ENCODE measurements at regions of chr19 and their contacts with region 1.

Region 1: GRCh38 chr19:55146078-55146704 is 2.8 kb downstream of the TNNT1 start:
- DNase-seq: peak; percentile 81
- ATAC-seq: peak; percentile 61
- H3K4me3 ChIP-seq: peak overlapping the region; percentile 76
- H3K27ac ChIP-seq: peak overlapping the region; percentile 33; the same call in 1 of the 2 replicates
- H3K4me1 ChIP-seq: peaks cover 6% of the 10 kb centered on the region; the same call in 1 of the 2 replicates
- H3K27me3 ChIP-seq: no peaks in the 10 kb centered on the region
- CTCF ChIP-seq: peak; percentile 91

Region 2: DNA sequence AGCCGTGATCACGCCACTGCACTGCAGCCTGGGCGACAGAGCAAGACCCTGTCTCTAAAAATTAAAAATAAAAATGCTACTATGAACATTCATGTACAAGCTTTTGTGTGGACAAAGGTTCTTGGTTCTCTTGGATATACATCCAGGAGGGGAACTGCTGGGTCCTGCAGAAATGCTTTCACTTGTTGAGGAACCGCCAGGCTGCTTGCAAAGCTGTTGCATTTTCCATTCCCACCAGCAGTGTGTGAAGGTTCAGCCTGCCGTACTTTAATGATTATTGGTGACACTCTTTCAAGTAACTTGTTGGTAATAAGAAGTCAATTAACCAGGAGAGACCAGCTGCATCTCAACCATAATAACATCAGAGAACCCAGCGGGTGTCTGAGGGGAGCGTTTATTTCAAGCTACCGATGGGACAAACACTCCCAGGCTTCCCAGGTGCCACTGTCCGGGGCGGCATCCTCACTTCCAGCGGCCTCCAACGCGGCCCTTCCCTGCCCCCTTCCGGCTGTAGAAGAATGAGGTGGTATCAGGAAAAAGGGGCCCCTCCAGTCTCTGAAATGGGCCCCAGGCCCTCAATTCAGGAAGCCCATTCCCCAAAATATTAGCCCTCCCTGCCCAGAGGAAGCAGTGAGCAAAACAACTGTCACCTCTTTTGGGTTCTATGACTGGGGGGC is 13.6 kb before region 1 on chr19:
- CTCF ChIA-PET with region 1: interaction called, 11 read pairs
- POLR2A ChIA-PET with region 1: no interaction called
- intact Hi-C with region 1: no loop called
- DNase-seq: no peak
- ATAC-seq: no peak
- H3K4me3 ChIP-seq: no peak overlapping the region
- H3K27ac ChIP-seq: no peak overlapping the region
- H3K4me1 ChIP-seq: no peaks in the 10 kb centered on the region
- H3K27me3 ChIP-seq: no peaks in the 10 kb centered on the region
- CTCF ChIP-seq: no peak

Region 3: GRCh38 chr19:55166530-55167268 is 20.5 kb after region 1 on chr19 and contains the start of gene DNAAF3:
- CTCF ChIA-PET with region 1: interaction called, 21 read pairs
- POLR2A ChIA-PET with region 1: no interaction called
- intact Hi-C with region 1: no loop called
- DNase-seq: peak; percentile 99
- ATAC-seq: peak; percentile 96
- H3K4me3 ChIP-seq: peak within 1 kb of the TSS; percentile 73
- H3K27ac ChIP-seq: peak within 1 kb of the TSS; percentile 60
- H3K4me1 ChIP-seq: peaks cover 12% of the 10 kb centered on the region; the same call in 1 of the 2 replicates
- H3K27me3 ChIP-seq: no peaks in the 10 kb centered on the region
- CTCF ChIP-seq: no peak
- total RNA-seq, gene DNAAF3: 30.0 and 45.7 TPM in 2 replicates

Region 4: DNA sequence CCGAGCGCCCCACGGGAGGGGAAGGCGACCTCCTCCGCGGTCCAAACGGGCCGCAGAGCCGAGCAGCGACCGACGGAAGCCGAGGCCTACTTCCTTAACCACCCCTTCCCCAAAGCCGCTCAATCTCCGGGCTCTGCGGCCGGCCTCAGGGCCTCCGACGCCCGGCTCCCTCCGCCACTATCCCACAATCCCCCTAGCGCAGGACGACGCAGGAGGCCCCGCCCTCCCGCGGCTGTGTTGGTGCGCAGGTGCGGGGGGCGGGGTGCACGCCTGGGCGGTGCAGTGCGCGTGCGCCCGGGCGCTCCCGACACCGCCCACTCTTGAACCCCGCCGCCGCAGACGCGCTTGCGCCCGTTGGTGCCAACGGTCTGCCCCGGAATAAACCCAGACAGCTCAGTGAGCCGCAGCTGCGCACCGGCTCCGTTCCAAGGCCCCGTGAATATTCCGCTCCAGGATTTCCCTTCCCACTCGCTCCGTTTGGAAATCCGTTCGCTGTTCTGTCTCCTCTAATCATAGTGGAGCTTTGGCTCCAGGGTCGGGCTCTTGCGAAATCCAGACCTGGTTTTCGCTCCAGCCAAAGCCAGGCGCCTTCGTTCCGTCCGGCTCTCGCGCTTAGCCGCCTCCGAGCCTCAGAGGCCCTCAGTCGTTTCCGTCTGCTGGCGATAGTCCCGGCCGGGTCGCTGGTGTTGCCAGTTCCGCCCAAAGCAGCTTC is 112.8 kb after region 1 on chr19 and contains the start of gene PPP6R1:
- CTCF ChIA-PET with region 1: interaction called, 11 read pairs
- POLR2A ChIA-PET with region 1: interaction called, 3 read pairs
- intact Hi-C with region 1: no loop called
- DNase-seq: peak; percentile 100
- ATAC-seq: peak; percentile 78
- H3K4me3 ChIP-seq: peak within 1 kb of the TSS; percentile 95
- H3K27ac ChIP-seq: peak within 1 kb of the TSS; percentile 95
- H3K4me1 ChIP-seq: peaks cover 40% of the 10 kb centered on the region
- H3K27me3 ChIP-seq: no peaks in the 10 kb centered on the region
- CTCF ChIP-seq: no peak
- total RNA-seq, gene PPP6R1: 159 and 221 TPM in 2 replicates

Region 5: GRCh38 chr19:55418185-55418584 is 272.0 kb after region 1 on chr19:
- CTCF ChIA-PET with region 1: interaction called, 18 read pairs
- POLR2A ChIA-PET with region 1: no interaction called
- intact Hi-C with region 1: loop called (anchors 1 kb)
- DNase-seq: peak; percentile 93
- ATAC-seq: peak; percentile 96
- H3K4me3 ChIP-seq: no peak overlapping the region
- H3K27ac ChIP-seq: no peak overlapping the region
- H3K4me1 ChIP-seq: no peaks in the 10 kb centered on the region
- H3K27me3 ChIP-seq: no peaks in the 10 kb centered on the region
- CTCF ChIP-seq: peak; percentile 97